ENCODE measurements at regions of chr4 and their contacts with region 1.

Region 1: DNA sequence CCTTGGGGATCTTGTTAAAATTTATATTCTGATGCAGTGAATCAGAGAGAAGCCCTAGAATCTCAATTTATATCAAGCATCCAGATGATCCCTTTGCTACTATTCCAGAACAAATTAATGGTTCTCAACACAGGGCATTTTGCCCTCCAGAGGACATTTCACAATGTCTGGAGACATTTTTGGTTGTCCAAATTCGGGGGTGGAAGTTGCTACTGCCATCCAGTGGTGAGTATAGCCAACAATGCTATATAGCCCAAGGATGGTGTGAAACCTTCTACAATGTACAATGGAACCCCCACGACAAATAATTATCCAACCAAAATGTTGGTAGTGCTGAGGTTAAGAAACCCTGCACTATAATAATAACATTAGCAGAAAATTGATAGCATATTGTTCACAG is 2440.0 kb downstream of the PCDH7 start:
- DNase-seq: peak; percentile 29 to 31
- H3K4me3 ChIP-seq: no peak overlapping the region
- H3K4me3 Mint-ChIP-seq: no peak overlapping the region
- H3K27ac Mint-ChIP-seq: no peak overlapping the region
- H3K4me1 ChIP-seq: no peaks in the 10 kb centered on the region
- H3K4me1 Mint-ChIP-seq: no peaks in the 10 kb centered on the region
- H3K27me3 ChIP-seq: no peaks in the 10 kb centered on the region
- H3K27me3 Mint-ChIP-seq: peaks cover 4% of the 10 kb centered on the region
- CTCF ChIP-seq: peak; percentile 31 to 33

Region 2: DNA sequence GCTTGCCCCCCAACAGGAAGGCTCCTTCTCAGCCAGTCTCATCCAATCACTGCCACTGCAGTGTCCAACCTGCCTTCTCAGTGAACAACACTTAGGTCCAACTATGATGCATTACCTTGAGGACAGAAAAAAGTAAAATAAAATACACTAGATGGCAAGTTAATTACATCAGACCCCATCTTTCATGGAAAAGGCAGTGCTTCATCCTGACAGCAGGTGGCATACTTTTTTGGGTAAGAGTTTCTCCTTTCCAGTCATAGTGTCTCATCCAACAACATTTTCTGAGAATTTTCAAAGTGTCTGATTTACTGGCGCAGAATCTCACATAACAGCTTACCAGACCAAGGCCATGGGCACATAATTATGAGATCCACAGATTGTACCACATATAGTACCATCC is 697.2 kb before region 1 on chr4:
- CTCF ChIA-PET with region 1: no interaction called
- POLR2A ChIA-PET with region 1: no interaction called
- intact Hi-C with region 1: loop called (anchors 1 kb)
- DNase-seq: peak in 1 of 2 experiments; percentile 21
- H3K4me3 ChIP-seq: no peak overlapping the region
- H3K4me3 Mint-ChIP-seq: no peak overlapping the region
- H3K27ac Mint-ChIP-seq: no peak overlapping the region
- H3K4me1 ChIP-seq: no peaks in the 10 kb centered on the region
- H3K4me1 Mint-ChIP-seq: no peaks in the 10 kb centered on the region
- H3K27me3 ChIP-seq: no peaks in the 10 kb centered on the region
- H3K27me3 Mint-ChIP-seq: no peaks in the 10 kb centered on the region
- CTCF ChIP-seq: peak; percentile 48 to 56

Region 3: DNA sequence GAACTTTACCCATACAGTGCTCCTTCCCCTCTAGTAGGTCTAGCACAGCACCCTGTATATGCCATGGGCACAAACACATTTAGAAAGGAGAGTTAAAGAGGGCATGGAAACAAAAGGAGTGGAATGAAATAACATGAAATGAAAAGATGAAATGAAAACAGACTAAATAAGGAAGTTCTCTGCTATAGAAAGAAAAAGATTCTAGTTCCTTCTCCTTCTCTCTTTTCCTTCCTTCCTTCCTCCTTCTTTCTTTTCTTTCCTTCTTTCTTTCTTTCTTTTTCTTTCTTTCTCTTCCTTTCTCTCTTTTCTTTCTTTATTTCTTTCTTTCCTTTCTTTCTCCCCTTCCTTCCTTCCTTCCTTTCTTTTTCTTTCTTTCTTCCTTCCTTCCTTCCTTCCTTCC is 242.5 kb before region 1 on chr4:
- CTCF ChIA-PET with region 1: no interaction called
- POLR2A ChIA-PET with region 1: no interaction called
- intact Hi-C with region 1: no loop called
- DNase-seq: no peak
- H3K4me3 ChIP-seq: no peak overlapping the region
- H3K4me3 Mint-ChIP-seq: no peak overlapping the region
- H3K27ac Mint-ChIP-seq: peak overlapping the region; percentile 45
- H3K4me1 ChIP-seq: no peaks in the 10 kb centered on the region
- H3K4me1 Mint-ChIP-seq: no peaks in the 10 kb centered on the region
- H3K27me3 ChIP-seq: no peaks in the 10 kb centered on the region
- H3K27me3 Mint-ChIP-seq: no peaks in the 10 kb centered on the region
- CTCF ChIP-seq: no peak

Region 4: DNA sequence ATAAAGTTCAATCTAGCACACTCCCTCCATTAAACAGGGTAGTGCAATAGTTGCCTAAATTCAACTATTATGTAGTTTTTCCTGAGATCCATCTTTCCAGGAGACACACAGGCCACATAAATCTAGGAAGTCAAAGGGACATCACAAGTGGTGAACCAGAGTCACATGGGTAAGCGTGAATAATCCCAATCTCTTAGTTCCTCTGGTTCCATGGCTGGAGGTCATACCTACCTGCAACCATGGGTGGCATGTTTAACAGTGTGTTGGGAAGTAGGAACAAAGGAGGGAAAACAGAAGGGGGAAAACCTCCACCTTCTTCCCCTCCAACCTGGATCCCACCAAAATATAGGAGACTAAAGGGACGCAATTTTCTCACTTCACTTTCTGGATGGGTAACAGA is 432.6 kb after region 1 on chr4:
- CTCF ChIA-PET with region 1: no interaction called
- POLR2A ChIA-PET with region 1: no interaction called
- intact Hi-C with region 1: no loop called
- DNase-seq: no peak
- H3K4me3 ChIP-seq: no peak overlapping the region
- H3K4me3 Mint-ChIP-seq: no peak overlapping the region
- H3K27ac Mint-ChIP-seq: no peak overlapping the region
- H3K4me1 ChIP-seq: no peaks in the 10 kb centered on the region
- H3K4me1 Mint-ChIP-seq: no peaks in the 10 kb centered on the region
- H3K27me3 ChIP-seq: no peaks in the 10 kb centered on the region
- H3K27me3 Mint-ChIP-seq: no peaks in the 10 kb centered on the region
- CTCF ChIP-seq: no peak

Measured in Caco-2 (cell line).